Activated B cell treated with CpG ODN at 0.5 μM for 24 hours (primary cell): ENCODE measurements at regions of chr19 and their contacts with region 1.

Region 1: DNA sequence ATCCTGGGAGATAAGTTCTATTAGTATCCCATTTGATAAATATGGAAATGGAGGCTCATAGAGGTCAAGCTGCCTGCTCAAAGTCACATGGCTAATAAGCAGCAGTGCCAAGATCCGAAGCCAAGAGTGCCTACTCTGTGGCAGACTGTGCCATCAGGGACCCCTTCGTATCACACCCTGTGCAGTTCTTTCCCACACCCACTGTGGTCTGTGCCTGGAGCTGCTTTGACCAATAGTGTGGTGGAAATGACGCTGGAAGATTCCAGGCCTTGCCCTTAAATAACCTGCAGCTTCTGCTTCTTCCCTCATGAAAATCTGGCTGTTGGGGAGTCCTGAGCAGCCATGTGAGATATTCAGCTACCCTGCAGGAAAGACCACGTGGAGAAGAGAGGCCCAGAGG is 10.1 kb downstream of the OPA3 start:
- DNase-seq: no peak
- ATAC-seq: no peak
- H3K4me3 Mint-ChIP-seq: no peak overlapping the region
- H3K27ac Mint-ChIP-seq: no peak overlapping the region
- H3K4me1 Mint-ChIP-seq: peaks cover 7% of the 10 kb centered on the region
- H3K27me3 Mint-ChIP-seq: no peaks in the 10 kb centered on the region
- CTCF ChIP-seq: no peak

Region 2: DNA sequence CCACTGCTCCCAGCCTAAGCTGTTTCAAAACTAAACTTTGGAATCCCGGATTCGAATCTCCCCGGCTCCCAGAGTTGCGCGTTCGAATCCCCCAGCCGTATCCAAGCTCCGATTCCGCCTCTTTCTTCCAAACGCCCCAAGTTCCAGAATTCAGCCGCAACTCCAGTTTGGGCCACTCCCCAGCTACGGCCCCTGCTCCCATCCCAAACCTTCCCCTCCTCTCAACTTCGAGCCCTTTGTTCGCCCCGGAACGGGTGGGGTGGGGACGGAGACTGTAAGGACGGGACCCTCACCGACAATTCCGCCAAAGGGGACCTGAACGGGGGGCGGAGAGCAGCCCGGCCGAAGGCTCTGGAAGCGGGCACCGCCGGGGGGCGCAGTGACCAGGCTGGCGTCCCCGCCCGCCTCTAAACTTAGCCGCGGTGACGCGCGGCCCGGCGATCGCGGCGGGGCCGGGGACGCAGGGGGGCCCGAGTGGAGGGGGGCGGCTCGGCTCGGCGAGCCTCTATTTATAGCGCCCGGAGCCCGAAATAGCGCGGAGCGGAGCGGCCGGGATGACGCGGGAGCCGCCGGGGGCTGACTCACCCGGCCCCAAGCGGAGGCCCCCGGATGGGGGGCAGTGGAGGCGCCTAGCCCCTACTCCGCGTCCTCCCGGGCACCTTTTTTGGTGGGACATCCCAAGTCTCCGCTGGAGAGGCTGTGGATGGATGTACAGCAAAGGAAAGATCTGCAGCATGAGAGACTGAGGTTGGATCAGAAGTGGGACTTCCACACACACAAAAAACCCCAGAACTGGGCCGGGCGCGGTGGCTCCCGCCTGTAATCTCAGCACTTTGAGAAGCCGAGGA is 145.9 kb before region 1 on chr19:
- CTCF ChIA-PET with region 1: no interaction called
- POLR2A ChIA-PET with region 1: no interaction called
- intact Hi-C with region 1: no loop called
- DNase-seq: no peak
- ATAC-seq: peak; percentile 9
- H3K4me3 Mint-ChIP-seq: peak overlapping the region; percentile 80
- H3K27ac Mint-ChIP-seq: no peak overlapping the region
- H3K4me1 Mint-ChIP-seq: peaks cover 27% of the 10 kb centered on the region
- H3K27me3 Mint-ChIP-seq: no peaks in the 10 kb centered on the region
- CTCF ChIP-seq: no peak

Region 3: DNA sequence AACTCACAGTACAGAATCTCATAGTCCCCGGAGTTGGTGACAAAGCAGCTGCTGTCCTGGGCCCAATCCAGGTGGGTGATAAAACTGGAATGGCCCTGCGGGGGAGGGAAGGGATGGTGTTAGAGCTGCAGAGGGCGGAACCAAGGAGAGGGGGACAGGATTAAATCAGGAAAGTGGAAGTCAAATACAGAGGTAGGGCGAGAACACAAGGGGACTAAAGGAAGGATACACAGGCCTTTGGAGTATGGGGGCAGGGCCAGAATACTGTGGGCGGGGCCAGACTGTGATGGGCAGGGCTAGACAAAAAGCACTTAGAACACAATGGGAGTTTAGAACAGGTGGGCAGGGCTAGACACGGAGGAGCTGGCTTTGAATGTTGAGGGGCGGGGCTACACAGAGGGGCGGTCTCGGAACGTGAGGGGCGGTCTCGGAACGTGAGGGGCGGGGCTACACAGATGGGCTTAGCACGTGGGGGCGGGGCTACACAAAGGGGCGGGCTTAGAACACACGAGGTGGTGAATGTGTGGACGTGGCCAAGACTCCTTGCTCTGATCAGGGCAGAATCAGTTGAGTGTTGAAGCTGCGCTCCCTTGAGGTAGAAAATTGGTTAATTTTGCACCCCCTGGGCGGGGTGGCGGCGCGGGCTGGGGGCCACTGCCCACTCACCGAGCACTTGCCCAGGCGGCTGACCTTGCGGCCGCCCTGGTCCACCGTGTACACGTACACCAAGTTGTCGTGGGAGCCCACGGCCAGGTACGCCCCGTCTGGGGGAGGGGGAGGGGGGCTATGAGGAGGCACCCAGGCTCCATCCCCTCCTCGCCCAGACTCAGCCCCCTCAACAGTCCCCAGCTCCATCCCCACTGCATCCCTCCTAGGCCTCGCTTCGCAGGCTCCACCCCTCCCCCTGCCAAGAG is 41.5 kb after region 1 on chr19:
- CTCF ChIA-PET with region 1: no interaction called
- POLR2A ChIA-PET with region 1: interaction called, 11 read pairs
- intact Hi-C with region 1: no loop called
- DNase-seq: peak; percentile 53
- ATAC-seq: peak; percentile 97
- H3K4me3 Mint-ChIP-seq: no peak overlapping the region
- H3K27ac Mint-ChIP-seq: no peak overlapping the region
- H3K4me1 Mint-ChIP-seq: peaks cover 11% of the 10 kb centered on the region
- H3K27me3 Mint-ChIP-seq: no peaks in the 10 kb centered on the region
- CTCF ChIP-seq: no peak

Region 4: GRCh38 chr19:45834970-45835369 is 260.4 kb after region 1 on chr19:
- CTCF ChIA-PET with region 1: no interaction called
- POLR2A ChIA-PET with region 1: no interaction called
- intact Hi-C with region 1: no loop called
- DNase-seq: no peak
- ATAC-seq: no peak
- H3K4me3 Mint-ChIP-seq: no peak overlapping the region
- H3K27ac Mint-ChIP-seq: no peak overlapping the region
- H3K4me1 Mint-ChIP-seq: no peaks in the 10 kb centered on the region
- H3K27me3 Mint-ChIP-seq: no peaks in the 10 kb centered on the region
- CTCF ChIP-seq: no peak